ENCODE measurements at regions of chr1 and their contacts with region 1.

Region 1: DNA sequence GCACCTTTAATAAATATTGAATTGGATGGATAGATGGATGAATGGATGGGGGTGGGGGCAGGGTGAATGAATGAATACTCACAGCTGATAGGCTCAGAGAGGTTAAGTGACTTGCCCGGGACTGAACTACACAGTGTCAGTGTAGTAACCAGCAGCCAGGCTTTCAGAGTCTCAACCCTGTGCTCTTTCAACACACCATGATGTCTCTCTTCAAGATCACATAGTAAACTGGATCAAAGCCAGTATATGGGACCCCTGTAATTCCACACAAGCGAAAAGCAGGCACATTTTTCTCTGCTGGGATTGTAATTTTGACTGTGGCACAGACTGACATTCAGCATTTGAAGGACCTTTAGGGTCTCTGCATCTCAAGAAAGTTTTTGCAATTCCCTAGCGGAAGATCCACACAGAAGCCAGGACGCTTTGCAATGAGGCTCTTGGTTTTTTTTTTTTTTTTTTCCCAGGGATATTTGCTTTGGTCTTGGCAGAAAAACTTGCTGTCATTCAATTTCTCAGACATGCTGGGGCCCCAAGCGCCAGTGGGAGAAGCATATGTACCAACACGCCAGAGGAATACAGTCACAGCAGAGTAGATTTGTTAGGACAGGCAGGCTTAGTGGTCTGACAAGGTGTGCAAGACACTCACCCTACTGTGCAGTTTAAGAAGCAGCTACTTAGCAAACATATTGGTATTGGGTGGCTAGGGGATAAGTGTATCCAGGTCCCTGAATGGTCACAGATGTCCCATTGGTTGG is 213.1 kb upstream of the CAMK1G start:
- DNase-seq: no peak

Region 2: DNA sequence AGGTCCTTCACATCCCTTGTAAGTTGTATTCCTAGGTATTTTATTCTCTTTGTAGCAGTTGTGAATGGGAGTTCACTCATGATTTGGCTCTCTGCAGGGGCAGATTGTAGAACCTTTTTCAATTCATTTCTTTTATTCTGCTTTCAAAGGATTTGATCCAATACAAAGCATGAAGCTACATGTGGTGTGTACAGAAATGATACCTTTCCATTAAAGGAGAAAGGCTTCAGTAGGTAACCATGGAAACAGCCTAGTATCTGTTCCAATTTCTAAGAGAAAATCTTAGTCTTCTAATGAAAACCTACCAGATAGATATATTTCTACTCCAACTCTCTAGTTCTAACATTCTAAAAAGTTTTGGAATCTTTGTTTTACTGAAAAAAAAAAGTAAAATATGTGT is 672.6 kb after region 1 on chr1:
- intact Hi-C with region 1: loop called in 1 of 2 experiments (anchors 5 kb)
- DNase-seq: no peak

Measured in posterior vena cava (tissue), 2 donors.